Sigmoid colon (tissue), 7 donors: ENCODE measurements at regions of chr2 and their contacts with region 1.

Region 1: GRCh38 chr2:147910990-147911473 is 66.2 kb downstream of the ACVR2A start:
- DNase-seq: no peak
- H3K4me3 ChIP-seq: no peak overlapping the region
- H3K27ac ChIP-seq: no peak overlapping the region
- H3K4me1 ChIP-seq: peaks cover 0 to 51% (median 28%) of the 10 kb centered on the region in 4 donors
- H3K27me3 ChIP-seq: no peaks in the 10 kb centered on the region
- CTCF ChIP-seq: peak; percentile 36 to 74 (median 64)
- EP300 ChIP-seq: no peak
- POLR2A ChIP-seq: no peak

Region 2: GRCh38 chr2:146734042-146734820 is 1176.8 kb before region 1 on chr2:
- intact Hi-C with region 1: loop called (anchors 5 kb)
- DNase-seq: no peak
- H3K4me3 ChIP-seq: no peak overlapping the region
- H3K27ac ChIP-seq: no peak overlapping the region
- H3K4me1 ChIP-seq: no peaks in the 10 kb centered on the region
- H3K27me3 ChIP-seq: no peaks in the 10 kb centered on the region
- CTCF ChIP-seq: peak; percentile 33 to 54 (median 41)
- EP300 ChIP-seq: no peak
- POLR2A ChIP-seq: no peak

Region 3: DNA sequence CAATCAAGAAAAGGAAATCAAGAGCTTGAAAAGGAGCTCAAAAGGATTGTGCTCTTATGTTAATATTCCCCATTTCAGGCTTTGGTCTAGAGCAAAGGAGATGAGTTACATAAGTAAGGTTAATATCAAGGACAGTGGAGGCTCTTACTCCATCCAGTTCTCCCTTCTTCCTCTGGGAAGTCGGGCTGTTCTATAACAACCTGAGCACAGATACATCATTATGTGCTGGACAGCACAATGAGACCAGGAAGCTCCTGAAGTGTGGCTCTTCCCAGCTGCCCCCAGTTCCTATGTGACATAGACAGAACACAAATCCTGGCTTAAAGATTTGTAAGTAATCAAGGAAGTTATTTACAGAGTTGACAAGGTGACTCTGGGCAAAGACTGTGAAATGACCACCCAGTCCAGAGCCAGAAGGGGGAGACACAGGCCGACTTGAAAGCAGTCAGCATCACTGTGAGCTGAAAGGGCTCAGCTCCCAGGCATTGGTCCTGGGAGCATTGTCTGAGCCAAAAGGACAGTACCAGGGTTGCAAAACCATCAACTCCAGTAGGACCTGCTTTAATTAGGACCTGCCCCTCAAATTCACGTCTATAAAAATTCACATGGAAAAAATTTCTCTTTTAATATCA is 983.8 kb before region 1 on chr2:
- intact Hi-C with region 1: loop called (anchors 1 kb)
- DNase-seq: peak; percentile 81
- H3K4me3 ChIP-seq: no peak overlapping the region
- H3K27ac ChIP-seq: peak overlapping the region in 1 of 4 donors; percentile 20
- H3K4me1 ChIP-seq: no peaks in the 10 kb centered on the region
- H3K27me3 ChIP-seq: no peaks in the 10 kb centered on the region
- CTCF ChIP-seq: peak; percentile 31 to 61 (median 39)
- EP300 ChIP-seq: no peak
- POLR2A ChIP-seq: no peak

Region 4: GRCh38 chr2:147045113-147045512 is 865.9 kb before region 1 on chr2:
- intact Hi-C with region 1: loop called (anchors 5 kb)
- DNase-seq: no peak
- H3K4me3 ChIP-seq: no peak overlapping the region
- H3K27ac ChIP-seq: no peak overlapping the region
- H3K4me1 ChIP-seq: peaks cover 0 to 13% (median 0%) of the 10 kb centered on the region in 4 donors
- H3K27me3 ChIP-seq: no peaks in the 10 kb centered on the region
- CTCF ChIP-seq: peak in 3 of 4 experiments; percentile 29 to 55 (median 32)
- EP300 ChIP-seq: no peak
- POLR2A ChIP-seq: no peak

Region 5: GRCh38 chr2:147082850-147083522 is 828.0 kb before region 1 on chr2:
- intact Hi-C with region 1: loop called (anchors 5 kb)
- DNase-seq: no peak
- H3K4me3 ChIP-seq: no peak overlapping the region
- H3K27ac ChIP-seq: peak overlapping the region in 1 of 4 donors; percentile 5
- H3K4me1 ChIP-seq: no peaks in the 10 kb centered on the region
- H3K27me3 ChIP-seq: no peaks in the 10 kb centered on the region
- CTCF ChIP-seq: peak; percentile 41 to 81 (median 75)
- EP300 ChIP-seq: no peak
- POLR2A ChIP-seq: no peak

Region 6: DNA sequence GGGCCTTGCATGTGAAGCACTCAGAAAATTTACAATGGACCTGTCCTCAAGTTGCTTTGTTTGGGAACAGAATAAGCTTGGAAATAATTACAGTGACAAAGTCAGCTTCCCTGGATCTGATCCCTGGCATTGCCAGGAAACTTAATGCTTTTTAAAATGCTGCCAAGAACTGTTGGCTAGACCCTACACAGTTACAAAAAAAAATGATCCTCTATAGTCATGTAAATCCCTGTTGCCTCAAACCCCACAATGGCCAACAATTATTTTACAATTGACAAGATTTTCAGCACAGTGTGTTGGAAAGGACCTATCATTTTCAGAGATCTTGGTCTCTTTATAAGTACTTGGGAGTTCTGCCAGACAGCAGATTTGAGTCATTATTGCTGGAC is 536.6 kb before region 1 on chr2:
- intact Hi-C with region 1: loop called (anchors 10 kb)
- DNase-seq: no peak
- H3K4me3 ChIP-seq: no peak overlapping the region
- H3K27ac ChIP-seq: peak overlapping the region in 3 of 4 donors; percentile 2 to 49 (median 30)
- H3K4me1 ChIP-seq: peaks cover 0 to 32% (median 17%) of the 10 kb centered on the region in 4 donors
- H3K27me3 ChIP-seq: no peaks in the 10 kb centered on the region
- CTCF ChIP-seq: no peak
- EP300 ChIP-seq: no peak
- POLR2A ChIP-seq: no peak

Region 7: DNA sequence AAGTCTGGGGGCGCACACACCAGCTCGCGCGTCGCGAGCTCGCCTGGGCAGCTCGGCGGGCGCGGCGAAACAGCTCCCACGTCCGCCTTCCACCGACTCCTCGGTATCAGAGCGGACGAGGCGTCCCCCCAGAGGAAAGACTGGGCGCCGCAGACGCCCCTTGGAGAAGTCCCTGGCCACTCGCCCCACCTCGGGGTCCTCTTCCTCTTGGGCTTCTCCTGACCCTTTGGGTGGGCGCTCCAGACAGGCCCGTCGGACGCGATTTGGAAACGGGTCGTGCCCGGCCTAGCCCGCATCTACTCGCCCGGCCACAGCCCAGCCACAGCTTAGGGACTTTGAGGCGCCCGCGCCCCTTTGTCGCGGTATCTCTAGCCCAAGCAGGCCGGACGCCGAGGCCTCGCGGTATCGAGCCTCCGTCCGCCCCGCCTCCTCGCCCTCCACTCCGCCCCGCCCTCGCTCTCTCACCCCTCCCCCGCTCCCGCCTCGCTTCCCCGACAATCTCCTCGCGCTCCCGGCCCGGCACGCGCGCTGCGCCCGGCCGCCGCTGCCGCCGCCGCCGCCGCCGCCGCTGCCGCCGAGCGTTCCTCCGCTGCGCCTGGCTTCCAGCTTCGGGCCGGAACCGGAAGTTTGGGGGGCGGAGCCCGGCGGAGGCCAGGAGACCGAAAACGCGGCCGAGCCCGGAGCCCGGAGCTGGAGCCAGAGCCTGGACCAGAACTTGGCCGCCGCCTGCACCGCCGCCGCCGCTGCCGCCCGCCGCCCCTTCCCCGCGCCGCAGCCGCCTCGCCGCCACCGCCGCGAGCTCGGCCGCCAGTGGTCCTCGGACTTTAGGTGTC is 67.0 kb before region 1 on chr2:
- intact Hi-C with region 1: loop called (anchors 5 kb)
- DNase-seq: peak; percentile 96
- H3K4me3 ChIP-seq: peak overlapping the region; percentile 79 to 87 (median 80)
- H3K27ac ChIP-seq: peak overlapping the region; percentile 95 to 99 (median 98)
- H3K4me1 ChIP-seq: peaks cover 0 to 38% (median 20%) of the 10 kb centered on the region in 4 donors
- H3K27me3 ChIP-seq: no peaks in the 10 kb centered on the region
- CTCF ChIP-seq: peak in 3 of 4 experiments; percentile 9 to 39 (median 28)
- EP300 ChIP-seq: peak in 1 of 4 donors; percentile 20
- POLR2A ChIP-seq: peak in 1 of 2 donors; percentile 24

Region 8: GRCh38 chr2:147945660-147946059 is 34.6 kb after region 1 on chr2:
- intact Hi-C with region 1: no loop called
- DNase-seq: no peak
- H3K4me3 ChIP-seq: no peak overlapping the region
- H3K27ac ChIP-seq: no peak overlapping the region
- H3K4me1 ChIP-seq: no peaks in the 10 kb centered on the region
- H3K27me3 ChIP-seq: no peaks in the 10 kb centered on the region
- CTCF ChIP-seq: no peak
- EP300 ChIP-seq: no peak
- POLR2A ChIP-seq: no peak